CD8-positive, alpha-beta T cell (primary cell): ENCODE measurements at regions of chr6 and their contacts with region 1.

Region 1: DNA sequence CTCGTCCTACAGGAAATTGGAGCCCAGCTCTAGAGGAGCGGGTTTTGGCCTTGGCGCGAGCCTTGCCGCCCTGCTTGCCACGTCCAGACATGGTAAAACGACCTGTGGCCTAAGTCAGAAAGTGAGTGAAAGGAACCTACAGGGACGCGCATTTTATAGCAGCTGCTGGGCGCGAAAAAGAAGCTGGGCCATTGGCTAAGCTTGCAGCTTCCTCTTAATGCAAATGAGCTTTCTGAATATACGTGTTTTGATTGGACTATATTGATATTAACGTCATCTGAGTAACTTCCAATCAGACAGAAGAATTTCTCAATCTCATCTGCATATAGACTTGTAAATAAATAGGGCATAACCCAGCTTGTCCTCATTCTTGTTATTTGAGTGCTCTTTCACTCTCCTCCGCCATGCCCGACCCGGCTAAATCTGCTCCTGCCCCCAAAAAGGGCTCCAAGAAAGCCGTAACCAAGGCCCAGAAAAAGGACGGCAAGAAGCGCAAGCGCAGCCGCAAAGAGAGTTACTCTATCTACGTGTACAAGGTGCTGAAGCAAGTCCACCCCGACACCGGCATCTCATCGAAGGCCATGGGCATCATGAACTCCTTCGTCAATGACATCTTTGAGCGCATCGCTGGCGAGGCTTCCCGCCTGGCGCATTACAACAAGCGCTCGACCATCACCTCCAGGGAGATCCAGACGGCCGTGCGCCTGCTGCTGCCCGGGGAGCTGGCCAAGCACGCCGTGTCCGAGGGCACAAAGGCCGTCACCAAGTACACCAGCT is 18.9 kb downstream of the OR2B2 start:
- DNase-seq: peak; percentile 79 to 96 (median 85)
- ATAC-seq: peak; percentile 72
- H3K4me3 ChIP-seq: peak overlapping the region; percentile 66 to 81
- H3K4me3 Mint-ChIP-seq: no peak overlapping the region
- H3K27ac ChIP-seq: peak overlapping the region; percentile 70 to 88
- H3K27ac Mint-ChIP-seq: no peak overlapping the region
- H3K4me1 ChIP-seq: peaks cover 18% of the 10 kb centered on the region
- H3K4me1 Mint-ChIP-seq: peaks cover 29% of the 10 kb centered on the region
- H3K27me3 ChIP-seq: no peaks in the 10 kb centered on the region
- H3K27me3 Mint-ChIP-seq: no peaks in the 10 kb centered on the region
- CTCF ChIP-seq: no peak

Region 2: DNA sequence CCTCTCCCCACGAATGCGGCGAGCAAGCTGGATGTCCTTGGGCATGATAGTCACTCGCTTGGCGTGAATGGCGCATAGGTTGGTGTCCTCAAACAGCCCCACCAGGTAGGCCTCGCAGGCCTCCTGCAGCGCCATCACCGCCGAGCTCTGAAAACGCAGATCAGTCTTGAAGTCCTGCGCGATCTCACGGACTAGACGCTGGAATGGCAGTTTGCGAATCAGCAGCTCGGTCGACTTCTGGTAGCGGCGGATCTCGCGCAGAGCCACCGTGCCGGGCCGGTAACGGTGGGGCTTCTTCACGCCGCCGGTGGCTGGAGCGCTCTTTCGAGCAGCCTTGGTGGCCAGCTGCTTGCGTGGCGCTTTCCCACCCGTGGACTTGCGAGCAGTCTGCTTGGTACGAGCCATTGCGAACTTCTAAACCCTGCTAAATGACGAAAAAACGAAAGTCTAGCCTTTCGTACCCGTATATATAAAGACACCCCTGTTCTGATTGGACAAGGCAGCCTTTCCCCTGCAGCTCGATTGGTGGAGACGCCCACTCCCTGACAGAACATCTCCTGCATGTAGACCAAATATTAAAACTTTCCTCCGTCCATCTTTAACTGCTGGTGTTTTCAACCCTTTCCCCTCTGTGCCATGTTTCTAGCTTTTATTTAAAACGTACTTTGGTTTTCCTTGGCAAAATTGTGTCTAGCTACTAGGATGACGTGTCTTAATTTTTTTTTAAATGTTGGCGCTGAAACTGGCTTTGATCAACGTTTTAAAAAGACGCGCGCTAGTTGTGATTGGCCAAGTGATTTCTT is 1696.2 kb before region 1 on chr6:
- CTCF ChIA-PET with region 1: no interaction called
- POLR2A ChIA-PET with region 1: interaction called, 43 read pairs
- intact Hi-C with region 1: no loop called
- DNase-seq: peak; percentile 53 to 95 (median 79)
- ATAC-seq: peak; percentile 57
- H3K4me3 ChIP-seq: peak overlapping the region; percentile 78 to 82
- H3K4me3 Mint-ChIP-seq: peak overlapping the region; percentile 96
- H3K27ac ChIP-seq: peak overlapping the region; percentile 88 to 89
- H3K27ac Mint-ChIP-seq: peak overlapping the region; percentile 99
- H3K4me1 ChIP-seq: peaks cover 20% of the 10 kb centered on the region
- H3K4me1 Mint-ChIP-seq: peaks cover 44% of the 10 kb centered on the region
- H3K27me3 ChIP-seq: no peaks in the 10 kb centered on the region
- H3K27me3 Mint-ChIP-seq: no peaks in the 10 kb centered on the region
- CTCF ChIP-seq: no peak

Region 3: GRCh38 chr6:26596579-26597388 is 1296.5 kb before region 1 on chr6 and contains the start of gene ABT1:
- CTCF ChIA-PET with region 1: no interaction called
- POLR2A ChIA-PET with region 1: interaction called, 4 read pairs
- intact Hi-C with region 1: loop called (anchors 2 to 5 kb)
- DNase-seq: peak; percentile 94 to 99 (median 97)
- ATAC-seq: peak; percentile 85
- H3K4me3 ChIP-seq: peak within 1 kb of the TSS; percentile 93 to 94
- H3K4me3 Mint-ChIP-seq: no peak within 1 kb of the TSS
- H3K27ac ChIP-seq: peak within 1 kb of the TSS; percentile 90 to 94
- H3K27ac Mint-ChIP-seq: no peak within 1 kb of the TSS
- H3K4me1 ChIP-seq: peaks cover 18% of the 10 kb centered on the region
- H3K4me1 Mint-ChIP-seq: peaks cover 23% of the 10 kb centered on the region
- H3K27me3 ChIP-seq: peaks cover 0 to 4% of the 10 kb centered on the region in 2 experiments
- H3K27me3 Mint-ChIP-seq: peaks cover 10% of the 10 kb centered on the region
- CTCF ChIP-seq: no peak
- total RNA-seq, gene ABT1: 42.5 to 44.2 TPM

Region 4: GRCh38 chr6:27177485-27178406 is 715.5 kb before region 1 on chr6:
- CTCF ChIA-PET with region 1: interaction called, 7 read pairs
- POLR2A ChIA-PET with region 1: interaction called, 14 read pairs
- intact Hi-C with region 1: loop called in 1 of 2 experiments (anchors 2 kb)
- DNase-seq: peak; percentile 46 to 89 (median 72)
- ATAC-seq: peak; percentile 69
- H3K4me3 ChIP-seq: peak overlapping the region; percentile 95 to 100
- H3K4me3 Mint-ChIP-seq: peak overlapping the region; percentile 93
- H3K27ac ChIP-seq: peak overlapping the region; percentile 48 to 68
- H3K27ac Mint-ChIP-seq: peak overlapping the region; percentile 91
- H3K4me1 ChIP-seq: no peaks in the 10 kb centered on the region
- H3K4me1 Mint-ChIP-seq: peaks cover 17% of the 10 kb centered on the region
- H3K27me3 ChIP-seq: no peaks in the 10 kb centered on the region
- H3K27me3 Mint-ChIP-seq: peaks cover 3% of the 10 kb centered on the region
- CTCF ChIP-seq: peak; percentile 11

Region 5: GRCh38 chr6:27297857-27298730 is 595.2 kb before region 1 on chr6:
- CTCF ChIA-PET with region 1: no interaction called
- POLR2A ChIA-PET with region 1: no interaction called
- intact Hi-C with region 1: no loop called
- DNase-seq: no peak
- ATAC-seq: no peak
- H3K4me3 ChIP-seq: no peak overlapping the region
- H3K4me3 Mint-ChIP-seq: no peak overlapping the region
- H3K27ac ChIP-seq: no peak overlapping the region
- H3K27ac Mint-ChIP-seq: no peak overlapping the region
- H3K4me1 ChIP-seq: no peaks in the 10 kb centered on the region
- H3K4me1 Mint-ChIP-seq: no peaks in the 10 kb centered on the region
- H3K27me3 ChIP-seq: peaks cover 54 to 63% of the 10 kb centered on the region in 2 experiments
- H3K27me3 Mint-ChIP-seq: peaks cover 83% of the 10 kb centered on the region
- CTCF ChIP-seq: no peak

Region 6: DNA sequence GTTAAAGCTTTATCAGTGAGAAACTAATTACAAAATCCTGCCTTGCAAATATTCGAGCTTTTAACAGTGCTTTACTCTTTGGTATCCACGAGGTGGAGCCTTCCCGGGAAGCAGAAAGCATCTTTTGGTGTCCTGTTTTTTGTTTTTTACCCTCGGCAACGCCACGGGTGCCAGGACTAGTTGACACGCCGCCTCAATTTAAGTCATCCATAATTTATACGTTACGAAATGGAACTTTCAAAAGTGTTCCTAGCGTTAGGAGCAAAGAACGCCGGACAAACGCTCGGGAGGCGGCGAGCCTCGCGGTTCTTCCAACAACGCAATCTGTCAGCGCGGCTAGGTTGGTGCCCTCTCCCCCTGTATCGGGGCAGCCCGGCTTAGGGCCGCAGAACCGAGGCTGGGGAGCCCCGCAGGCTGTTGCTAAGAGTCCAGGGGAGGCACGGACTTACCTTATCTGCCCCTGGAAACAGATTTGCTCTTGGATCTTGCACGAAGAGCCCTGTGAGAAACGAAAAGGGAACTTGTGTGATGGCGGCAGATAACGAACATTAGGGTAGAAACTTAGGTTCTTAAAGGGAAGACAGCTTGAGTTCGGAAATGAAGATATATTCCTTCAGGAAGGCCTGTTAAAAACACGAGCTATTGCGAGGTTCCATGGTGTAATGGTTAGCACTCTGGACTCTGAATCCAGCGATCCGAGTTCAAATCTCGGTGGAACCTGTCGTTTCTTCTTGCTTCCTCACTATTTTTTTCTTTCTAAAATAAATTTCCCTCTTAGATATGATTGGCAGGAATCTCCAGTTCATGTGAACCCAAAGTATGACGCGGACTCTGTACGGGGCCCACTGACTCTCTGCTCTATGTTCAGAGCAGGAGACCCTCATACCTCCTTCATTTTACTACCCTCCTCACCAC is 374.1 kb before region 1 on chr6:
- CTCF ChIA-PET with region 1: interaction called, 15 read pairs
- POLR2A ChIA-PET with region 1: interaction called, 4 read pairs
- intact Hi-C with region 1: loop called (anchors 1 kb)
- DNase-seq: peak; percentile 29 to 88 (median 61)
- ATAC-seq: peak; percentile 78
- H3K4me3 ChIP-seq: peak overlapping the region; percentile 74 to 88
- H3K4me3 Mint-ChIP-seq: peak overlapping the region; percentile 83
- H3K27ac ChIP-seq: peak overlapping the region; percentile 59 to 72
- H3K27ac Mint-ChIP-seq: peak overlapping the region; percentile 83
- H3K4me1 ChIP-seq: peaks cover 10% of the 10 kb centered on the region
- H3K4me1 Mint-ChIP-seq: peaks cover 19% of the 10 kb centered on the region
- H3K27me3 ChIP-seq: peaks cover 0 to 9% of the 10 kb centered on the region in 2 experiments
- H3K27me3 Mint-ChIP-seq: peaks cover 18% of the 10 kb centered on the region
- CTCF ChIP-seq: peak; percentile 77

Region 7: GRCh38 chr6:27825025-27825793 is 68.0 kb before region 1 on chr6:
- CTCF ChIA-PET with region 1: interaction called, 77 read pairs
- POLR2A ChIA-PET with region 1: interaction called, 307 read pairs
- intact Hi-C with region 1: no loop called
- DNase-seq: peak in 1 of 9 experiments; percentile 45
- ATAC-seq: peak; percentile 6
- H3K4me3 ChIP-seq: peak overlapping the region; percentile 55 to 76
- H3K4me3 Mint-ChIP-seq: peak overlapping the region; percentile 89
- H3K27ac ChIP-seq: peak overlapping the region; percentile 81 to 91
- H3K27ac Mint-ChIP-seq: peak overlapping the region; percentile 99
- H3K4me1 ChIP-seq: peaks cover 24% of the 10 kb centered on the region
- H3K4me1 Mint-ChIP-seq: peaks cover 32% of the 10 kb centered on the region
- H3K27me3 ChIP-seq: no peaks in the 10 kb centered on the region
- H3K27me3 Mint-ChIP-seq: no peaks in the 10 kb centered on the region
- CTCF ChIP-seq: no peak